ENCODE measurements at regions of chr16 and their contacts with region 1.

Region 1: DNA sequence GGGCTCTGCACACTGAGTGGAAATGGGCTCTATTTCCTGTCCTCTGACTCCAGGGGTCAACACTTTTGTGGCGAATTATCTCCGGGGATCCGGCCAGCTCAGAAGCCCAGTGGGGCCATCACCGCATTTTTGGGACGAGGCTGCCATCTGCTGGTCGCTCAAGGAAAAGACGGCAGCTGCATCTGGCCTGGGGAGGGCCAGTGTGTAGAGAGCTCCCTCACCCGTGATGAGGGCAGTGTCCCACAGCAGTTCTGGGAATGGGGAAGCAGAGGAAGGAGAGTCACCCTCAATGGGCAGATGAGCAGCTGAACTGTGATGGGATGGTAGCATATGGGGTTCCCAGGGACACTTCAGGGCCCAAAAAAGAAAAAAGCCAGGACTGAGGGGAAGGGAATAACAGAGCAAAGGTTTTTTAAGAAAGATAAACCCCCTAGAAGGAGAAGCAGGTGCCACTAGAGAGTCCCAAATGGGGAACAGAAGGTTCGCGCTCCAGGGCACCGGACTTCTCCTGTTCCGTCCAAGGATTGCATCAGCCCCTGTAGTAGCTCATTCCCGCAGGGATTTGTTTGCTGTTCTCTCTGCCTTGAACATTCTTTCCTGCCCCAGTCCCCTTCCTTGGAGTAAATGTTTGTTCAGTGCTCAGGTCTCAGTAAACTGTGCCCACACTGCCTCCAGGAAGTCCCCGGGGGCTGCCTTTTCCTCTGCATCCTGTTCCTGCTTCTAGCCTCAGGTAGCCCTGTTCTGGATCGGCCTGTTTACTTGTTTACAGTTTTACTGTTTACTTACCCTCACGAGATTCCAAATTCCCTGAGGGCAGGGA is 9.3 kb upstream of the ABCC12 start:
- DNase-seq: no peak
- H3K4me3 ChIP-seq: no peak overlapping the region
- H3K27ac ChIP-seq: no peak overlapping the region
- H3K4me1 ChIP-seq: peaks cover 4% of the 10 kb centered on the region
- H3K27me3 ChIP-seq: no peaks in the 10 kb centered on the region
- CTCF ChIP-seq: peak; percentile 60 to 87 (median 74)
- POLR2A ChIP-seq: no peak

Region 2: DNA sequence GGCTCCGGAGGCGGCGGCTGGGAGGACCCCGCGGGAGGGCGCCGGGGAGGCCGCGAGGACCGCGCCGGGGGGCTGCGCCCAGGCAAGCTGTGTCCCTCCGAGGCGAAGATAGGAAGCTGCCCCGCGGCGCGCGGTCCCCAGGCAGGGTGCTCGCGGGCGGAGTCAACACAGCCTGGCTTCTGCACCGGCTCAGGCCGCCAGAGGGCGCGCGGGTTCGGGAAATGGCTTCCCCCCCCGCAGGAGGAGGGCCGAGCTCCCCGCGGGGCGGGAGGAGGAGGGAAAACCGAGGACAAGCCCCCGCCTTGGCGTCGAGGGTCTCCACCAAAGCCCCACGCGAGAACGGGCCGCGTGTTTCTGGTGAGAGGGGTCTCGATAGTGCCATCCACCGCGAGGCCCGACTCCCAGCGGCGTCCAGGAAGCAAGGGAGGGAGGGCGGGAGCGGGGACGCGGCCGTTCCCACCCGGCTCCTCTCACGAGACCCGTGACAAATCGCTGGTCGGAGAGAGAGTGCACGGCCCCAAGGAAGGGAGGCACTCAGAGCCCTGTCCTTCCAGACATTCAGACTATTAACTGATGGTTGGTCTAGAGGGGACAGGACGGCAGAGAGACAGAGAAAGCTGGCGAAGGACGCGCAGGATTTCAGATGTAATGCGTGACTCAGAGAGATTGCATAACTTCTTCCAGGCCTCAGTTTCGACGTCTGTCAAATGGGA is 1127.2 kb before region 1 on chr16:
- intact Hi-C with region 1: loop called (anchors 10 kb)
- DNase-seq: no peak
- H3K4me3 ChIP-seq: peak overlapping the region; percentile 55 to 86
- H3K27ac ChIP-seq: peak overlapping the region; percentile 76
- H3K4me1 ChIP-seq: peaks cover 5% of the 10 kb centered on the region
- H3K27me3 ChIP-seq: no peaks in the 10 kb centered on the region
- CTCF ChIP-seq: peak; percentile 83 to 97 (median 87)
- POLR2A ChIP-seq: no peak

Region 3: DNA sequence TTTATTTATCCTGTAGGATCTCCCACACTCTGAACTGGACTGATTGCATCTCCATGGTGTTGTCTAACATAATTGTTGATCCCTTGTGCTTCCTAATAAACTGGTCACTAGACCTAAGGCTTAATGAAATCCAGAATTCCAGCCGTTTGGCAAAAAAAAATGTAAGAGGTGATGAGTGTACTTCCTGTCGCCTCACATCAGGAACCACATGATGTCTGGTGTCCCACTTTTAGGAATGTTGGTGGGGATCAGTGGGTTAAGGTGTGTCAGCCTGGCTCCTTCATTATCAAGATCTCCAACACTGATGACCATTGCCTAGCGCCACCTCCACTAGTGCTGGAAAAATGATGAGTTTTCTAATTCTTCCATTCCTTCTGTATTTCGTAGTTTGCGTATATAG is 60.3 kb after region 1 on chr16:
- intact Hi-C with region 1: no loop called
- DNase-seq: no peak
- H3K4me3 ChIP-seq: no peak overlapping the region
- H3K27ac ChIP-seq: no peak overlapping the region
- H3K4me1 ChIP-seq: no peaks in the 10 kb centered on the region
- H3K27me3 ChIP-seq: no peaks in the 10 kb centered on the region
- CTCF ChIP-seq: no peak
- POLR2A ChIP-seq: no peak